ENCODE measurements at regions of chr1 and their contacts with region 1.

Region 1: DNA sequence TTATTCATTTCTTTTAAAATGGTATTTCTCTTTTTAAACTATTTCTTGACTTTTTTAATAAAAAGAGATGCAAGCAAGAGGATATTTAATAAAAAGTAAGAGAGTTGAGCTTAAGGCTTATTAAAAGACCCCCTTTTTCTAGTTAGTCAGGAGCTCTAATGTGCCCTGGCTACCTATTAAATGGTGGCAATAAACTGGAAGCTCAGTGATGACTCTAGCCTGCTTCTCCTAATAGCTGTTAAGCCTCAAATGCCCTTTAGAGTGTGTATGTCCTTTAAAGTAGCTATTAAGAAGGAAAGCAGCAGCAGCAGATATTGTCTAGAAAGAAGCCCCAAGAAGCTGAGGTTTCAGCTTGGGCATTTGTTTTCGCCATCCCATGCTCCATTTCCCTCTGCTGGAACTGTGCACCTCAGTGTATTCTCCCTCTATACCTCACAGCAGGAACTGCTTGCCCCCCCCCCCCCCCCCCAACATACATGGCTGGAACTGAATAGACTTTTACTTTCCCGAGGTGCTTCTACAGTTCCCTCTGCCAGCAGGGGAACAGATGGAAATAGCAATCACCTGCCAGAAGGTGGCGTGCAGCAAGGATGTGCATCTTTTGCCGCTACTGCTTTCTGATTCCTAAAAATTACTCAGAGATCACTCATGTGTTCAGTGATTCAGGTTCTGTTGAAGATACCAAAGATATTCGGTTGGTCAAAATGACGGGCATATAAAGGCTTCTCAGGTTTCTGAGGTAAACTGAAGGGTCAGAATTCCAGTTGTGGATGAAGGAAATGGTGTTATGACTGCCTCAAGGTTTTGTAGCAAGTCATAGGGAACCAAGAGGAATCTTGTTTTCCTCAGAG is 2.5 kb downstream of the RGS4 start:
- DNase-seq: peak; percentile 91
- ATAC-seq: peak; percentile 57
- H3K4me3 ChIP-seq: no peak overlapping the region
- H3K27ac ChIP-seq: no peak overlapping the region
- H3K4me1 ChIP-seq: no peaks in the 10 kb centered on the region; the same call in 1 of the 2 replicates
- H3K27me3 ChIP-seq: no peaks in the 10 kb centered on the region
- CTCF ChIP-seq: peak; percentile 89
- POLR2A ChIP-seq: no peak
- RAD21 ChIP-seq: peak; percentile 87

Region 2: GRCh38 chr1:162847839-162848453 is 223.7 kb before region 1 on chr1:
- CTCF ChIA-PET with region 1: interaction called, 21 read pairs
- POLR2A ChIA-PET with region 1: no interaction called
- dilution Hi-C with region 1: loop called (anchors 25 kb)
- in situ Hi-C with region 1: no loop called
- intact Hi-C with region 1: no loop called
- DNase-seq: peak; percentile 78
- ATAC-seq: peak; percentile 58; the same call in 1 of the 2 replicates
- H3K4me3 ChIP-seq: no peak overlapping the region
- H3K27ac ChIP-seq: no peak overlapping the region
- H3K4me1 ChIP-seq: peaks cover 6% of the 10 kb centered on the region; the same call in 1 of the 2 replicates
- H3K27me3 ChIP-seq: no peaks in the 10 kb centered on the region
- CTCF ChIP-seq: peak; percentile 86
- POLR2A ChIP-seq: no peak
- RAD21 ChIP-seq: peak; percentile 80

Region 3: GRCh38 chr1:162854245-162854882 is 217.3 kb before region 1 on chr1:
- CTCF ChIA-PET with region 1: interaction called, 21 read pairs
- POLR2A ChIA-PET with region 1: no interaction called
- dilution Hi-C with region 1: loop called (anchors 25 kb)
- in situ Hi-C with region 1: no loop called
- intact Hi-C with region 1: no loop called
- DNase-seq: peak; percentile 82
- ATAC-seq: peak; percentile 82
- H3K4me3 ChIP-seq: no peak overlapping the region
- H3K27ac ChIP-seq: no peak overlapping the region
- H3K4me1 ChIP-seq: peaks cover 4% of the 10 kb centered on the region; the same call in 1 of the 2 replicates
- H3K27me3 ChIP-seq: no peaks in the 10 kb centered on the region
- CTCF ChIP-seq: peak; percentile 87
- POLR2A ChIP-seq: no peak
- RAD21 ChIP-seq: peak; percentile 83

Region 4: DNA sequence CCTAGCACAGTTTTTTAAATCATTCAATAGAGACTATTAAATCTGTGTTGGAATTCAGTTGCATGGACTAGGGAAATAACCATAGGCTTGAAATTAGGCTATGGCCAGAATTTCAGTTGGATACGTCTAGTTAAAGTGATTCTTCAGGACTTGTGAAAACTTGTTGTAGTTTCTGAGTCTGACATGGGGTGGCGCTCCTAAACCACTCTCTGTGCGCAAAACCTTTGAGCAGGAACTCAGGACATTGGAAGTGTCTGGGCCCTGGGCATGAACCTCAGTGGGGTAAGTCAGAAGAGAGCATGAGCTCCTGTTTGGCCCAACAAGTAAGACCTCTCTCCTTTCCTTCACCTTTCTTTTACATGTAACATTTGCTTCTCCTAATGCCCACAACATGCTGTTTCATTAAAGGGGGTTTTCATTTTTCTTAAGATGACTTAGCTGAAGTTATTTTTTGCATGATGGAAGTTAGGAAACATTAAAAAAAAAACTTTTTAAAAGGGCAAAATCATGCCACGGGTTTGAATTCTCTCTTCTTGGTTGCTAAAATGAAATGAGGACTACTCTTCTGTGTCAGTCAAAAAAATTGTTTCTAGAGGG is 193.5 kb before region 1 on chr1:
- CTCF ChIA-PET with region 1: interaction called, 36 read pairs
- POLR2A ChIA-PET with region 1: interaction called, 3 read pairs
- dilution Hi-C with region 1: loop called (anchors 25 kb)
- in situ Hi-C with region 1: loop called (anchors 5 kb)
- intact Hi-C with region 1: loop called (anchors 1 kb)
- DNase-seq: peak; percentile 80
- ATAC-seq: peak; percentile 85
- H3K4me3 ChIP-seq: no peak overlapping the region
- H3K27ac ChIP-seq: no peak overlapping the region
- H3K4me1 ChIP-seq: peaks cover 2% of the 10 kb centered on the region; the same call in 1 of the 2 replicates
- H3K27me3 ChIP-seq: no peaks in the 10 kb centered on the region
- CTCF ChIP-seq: peak; percentile 95
- POLR2A ChIP-seq: peak; percentile 40; the same call in 1 of the 2 replicates
- RAD21 ChIP-seq: peak; percentile 100

Region 5: DNA sequence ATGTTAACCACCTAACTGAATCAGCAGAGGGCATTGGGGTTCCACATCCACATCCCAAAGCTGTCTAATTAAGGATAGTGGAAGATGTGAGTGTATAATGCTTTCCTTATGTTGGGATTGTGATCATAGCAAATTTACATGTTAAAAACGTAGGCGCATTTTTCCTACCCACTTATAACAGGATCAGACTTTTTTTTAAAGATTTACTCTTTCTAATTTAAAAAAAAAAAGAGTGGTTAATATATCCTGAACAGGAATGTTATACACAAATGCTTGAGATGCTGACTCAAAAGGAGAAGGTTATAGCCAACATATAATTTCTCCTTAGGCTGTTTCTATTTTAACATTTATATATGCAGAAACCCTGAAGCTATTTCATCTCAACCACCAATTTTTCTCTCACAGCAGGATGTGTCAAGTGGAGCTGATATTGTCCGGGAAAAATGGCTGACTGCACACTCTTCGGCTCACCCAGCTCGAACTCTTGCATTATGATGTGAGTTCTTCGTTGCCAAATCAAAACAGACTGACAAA is 90.8 kb after region 1 on chr1:
- CTCF ChIA-PET with region 1: interaction called, 5 read pairs
- POLR2A ChIA-PET with region 1: interaction called, 18 read pairs
- dilution Hi-C with region 1: no loop called
- in situ Hi-C with region 1: no loop called
- intact Hi-C with region 1: no loop called
- DNase-seq: peak; percentile 70
- ATAC-seq: peak; percentile 68
- H3K4me3 ChIP-seq: no peak overlapping the region
- H3K27ac ChIP-seq: peak overlapping the region; percentile 27; the same call in 1 of the 2 replicates
- H3K4me1 ChIP-seq: peaks cover 10% of the 10 kb centered on the region
- H3K27me3 ChIP-seq: no peaks in the 10 kb centered on the region
- CTCF ChIP-seq: no peak
- POLR2A ChIP-seq: no peak
- RAD21 ChIP-seq: no peak

Region 6: GRCh38 chr1:163174524-163175437 is 103.2 kb after region 1 on chr1:
- CTCF ChIA-PET with region 1: interaction called, 45 read pairs
- POLR2A ChIA-PET with region 1: no interaction called
- dilution Hi-C with region 1: no loop called
- in situ Hi-C with region 1: loop called (anchors 5 kb)
- intact Hi-C with region 1: loop called (anchors 1 kb)
- DNase-seq: peak; percentile 65
- ATAC-seq: peak; percentile 74
- H3K4me3 ChIP-seq: no peak overlapping the region
- H3K27ac ChIP-seq: no peak overlapping the region
- H3K4me1 ChIP-seq: peaks cover 10% of the 10 kb centered on the region
- H3K27me3 ChIP-seq: no peaks in the 10 kb centered on the region
- CTCF ChIP-seq: peak; percentile 94
- POLR2A ChIP-seq: no peak
- RAD21 ChIP-seq: peak; percentile 89

Region 7: GRCh38 chr1:163315773-163316374 is 244.2 kb after region 1 on chr1:
- CTCF ChIA-PET with region 1: interaction called, 44 read pairs
- POLR2A ChIA-PET with region 1: no interaction called
- dilution Hi-C with region 1: no loop called
- in situ Hi-C with region 1: loop called (anchors 5 kb)
- intact Hi-C with region 1: loop called (anchors 1 kb)
- DNase-seq: peak; percentile 68
- ATAC-seq: peak; percentile 57
- H3K4me3 ChIP-seq: no peak overlapping the region
- H3K27ac ChIP-seq: no peak overlapping the region
- H3K4me1 ChIP-seq: peaks cover 2% of the 10 kb centered on the region; the same call in 1 of the 2 replicates
- H3K27me3 ChIP-seq: no peaks in the 10 kb centered on the region
- CTCF ChIP-seq: peak; percentile 82
- POLR2A ChIP-seq: no peak
- RAD21 ChIP-seq: peak; percentile 84

Measured in IMR-90 (cell line).